ENCODE measurements at regions of chr18 and their contacts with region 1.

Region 1: GRCh38 chr18:47100214-47100831 is 50.0 kb downstream of the HDHD2 start:
- DNase-seq: peak; percentile 39
- ATAC-seq: peak; percentile 92
- H3K4me3 ChIP-seq: no peak overlapping the region
- H3K27ac ChIP-seq: no peak overlapping the region
- H3K4me1 ChIP-seq: peaks cover 0 to 4% of the 10 kb centered on the region in 2 experiments; a peak in 1 of 4 replicates
- H3K27me3 ChIP-seq: no peaks in the 10 kb centered on the region
- CTCF ChIP-seq: peak; percentile 72 to 82 (median 72)
- POLR2A ChIP-seq: no peak
- RAD21 ChIP-seq: peak; percentile 80

Region 2: DNA sequence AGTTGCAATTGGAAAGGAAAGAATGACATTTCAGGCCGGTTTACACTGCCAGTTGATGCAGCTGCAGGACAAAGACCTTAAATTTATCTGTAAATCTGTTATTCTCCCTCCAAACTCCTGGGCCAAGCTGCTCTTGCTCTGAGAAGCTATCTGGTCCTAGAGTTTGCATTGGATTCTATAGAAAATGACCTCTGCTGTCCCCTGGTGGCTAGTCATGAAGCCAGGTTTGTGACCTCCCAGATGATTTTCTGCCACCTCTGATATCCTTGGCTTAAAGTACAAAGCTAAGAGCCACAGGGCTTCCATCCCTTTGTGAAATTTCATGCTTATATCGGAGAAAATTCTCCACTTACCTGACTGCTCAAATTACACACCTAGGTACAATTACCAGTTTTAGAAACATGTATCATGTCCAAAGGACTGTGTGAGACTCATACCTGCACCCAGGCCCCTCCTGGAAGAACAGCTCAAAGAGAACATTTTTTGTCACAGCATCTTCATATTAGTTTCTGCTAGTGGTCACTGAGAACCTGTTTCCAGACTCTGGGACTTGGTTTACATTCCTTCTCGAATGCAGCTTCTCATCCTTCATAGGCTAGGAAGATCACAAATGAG is 104.7 kb after region 1 on chr18:
- CTCF ChIA-PET with region 1: interaction called, 42 read pairs
- POLR2A ChIA-PET with region 1: no interaction called
- RAD21 ChIA-PET with region 1: no interaction called
- intact Hi-C with region 1: loop called (anchors 1 kb)
- DNase-seq: peak; percentile 29
- ATAC-seq: peak; percentile 86
- H3K4me3 ChIP-seq: no peak overlapping the region
- H3K27ac ChIP-seq: no peak overlapping the region
- H3K4me1 ChIP-seq: no peaks in the 10 kb centered on the region
- H3K27me3 ChIP-seq: peaks cover 44% of the 10 kb centered on the region
- CTCF ChIP-seq: peak; percentile 77 to 87 (median 86); a peak in 5 of 6 replicates
- POLR2A ChIP-seq: no peak
- RAD21 ChIP-seq: peak; percentile 77

Region 3: DNA sequence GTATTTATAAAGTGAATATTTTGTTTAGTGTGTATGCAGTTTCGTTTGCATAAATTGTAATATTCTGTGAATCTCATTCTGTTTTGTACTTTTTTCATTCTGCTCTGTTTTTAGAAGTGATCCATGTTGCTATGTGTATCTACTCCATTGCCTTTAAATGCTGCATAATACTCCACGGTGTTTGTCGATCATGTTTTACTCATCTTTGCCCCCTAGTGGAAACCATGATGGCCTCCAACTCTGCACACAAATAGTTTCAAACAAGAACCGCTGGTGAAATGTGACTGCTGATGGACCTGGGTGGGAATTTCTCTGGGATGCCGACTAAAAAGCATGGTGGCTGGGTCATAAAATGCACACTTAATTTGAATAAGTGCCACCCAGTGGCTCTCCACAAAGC is 183.2 kb after region 1 on chr18:
- CTCF ChIA-PET with region 1: no interaction called
- POLR2A ChIA-PET with region 1: no interaction called
- RAD21 ChIA-PET with region 1: no interaction called
- intact Hi-C with region 1: loop called (anchors 1 kb)
- DNase-seq: peak; percentile 42
- ATAC-seq: peak; percentile 96
- H3K4me3 ChIP-seq: no peak overlapping the region
- H3K27ac ChIP-seq: no peak overlapping the region
- H3K4me1 ChIP-seq: no peaks in the 10 kb centered on the region
- H3K27me3 ChIP-seq: peaks cover 57% of the 10 kb centered on the region
- CTCF ChIP-seq: peak; percentile 38 to 81 (median 72); a peak in 5 of 6 replicates
- POLR2A ChIP-seq: no peak
- RAD21 ChIP-seq: peak; percentile 44; the same call in 1 of the 2 replicates

Region 4: DNA sequence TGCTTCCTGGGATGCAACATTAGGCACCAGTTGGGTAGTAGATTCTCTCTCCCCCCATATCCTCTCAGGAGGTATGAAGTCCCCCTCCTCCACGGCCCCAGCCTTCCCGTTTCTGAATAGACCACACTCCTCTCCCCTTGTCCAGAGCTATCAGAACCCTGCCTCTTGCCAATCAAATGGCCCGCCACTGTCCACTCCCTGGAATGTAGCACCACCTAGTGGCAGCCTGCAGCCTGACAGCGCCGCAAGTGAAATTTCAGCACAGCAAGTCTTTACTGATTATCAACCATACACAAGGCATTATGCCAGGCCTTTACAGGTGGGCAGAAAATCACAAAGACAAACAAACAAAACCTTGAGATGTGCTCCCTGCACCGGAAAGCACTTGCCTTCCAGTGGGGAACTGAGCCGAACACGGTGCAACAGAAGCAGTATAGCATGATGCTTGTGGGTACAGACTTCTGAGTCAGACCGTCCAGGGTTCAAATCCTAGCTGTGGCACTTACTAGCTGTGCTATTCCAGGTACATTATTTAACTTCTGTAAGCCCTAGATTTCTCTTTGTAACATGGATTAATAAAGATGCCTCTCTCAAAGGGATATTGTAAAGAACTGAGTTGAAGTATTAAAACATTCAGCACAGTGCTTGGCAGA is 656.2 kb after region 1 on chr18:
- CTCF ChIA-PET with region 1: no interaction called
- POLR2A ChIA-PET with region 1: no interaction called
- RAD21 ChIA-PET with region 1: no interaction called
- intact Hi-C with region 1: loop called (anchors 5 kb)
- DNase-seq: peak; percentile 44
- ATAC-seq: peak; percentile 74
- H3K4me3 ChIP-seq: no peak overlapping the region
- H3K27ac ChIP-seq: no peak overlapping the region
- H3K4me1 ChIP-seq: peaks cover 0 to 6% of the 10 kb centered on the region in 2 experiments; a peak in 1 of 4 replicates
- H3K27me3 ChIP-seq: no peaks in the 10 kb centered on the region
- CTCF ChIP-seq: peak; percentile 67 to 98 (median 97)
- POLR2A ChIP-seq: no peak
- RAD21 ChIP-seq: peak; percentile 73

Measured in HCT116 (cell line).